Testis (tissue), 5 donors: ENCODE measurements at regions of chr19 and their contacts with region 1.

Region 1: DNA sequence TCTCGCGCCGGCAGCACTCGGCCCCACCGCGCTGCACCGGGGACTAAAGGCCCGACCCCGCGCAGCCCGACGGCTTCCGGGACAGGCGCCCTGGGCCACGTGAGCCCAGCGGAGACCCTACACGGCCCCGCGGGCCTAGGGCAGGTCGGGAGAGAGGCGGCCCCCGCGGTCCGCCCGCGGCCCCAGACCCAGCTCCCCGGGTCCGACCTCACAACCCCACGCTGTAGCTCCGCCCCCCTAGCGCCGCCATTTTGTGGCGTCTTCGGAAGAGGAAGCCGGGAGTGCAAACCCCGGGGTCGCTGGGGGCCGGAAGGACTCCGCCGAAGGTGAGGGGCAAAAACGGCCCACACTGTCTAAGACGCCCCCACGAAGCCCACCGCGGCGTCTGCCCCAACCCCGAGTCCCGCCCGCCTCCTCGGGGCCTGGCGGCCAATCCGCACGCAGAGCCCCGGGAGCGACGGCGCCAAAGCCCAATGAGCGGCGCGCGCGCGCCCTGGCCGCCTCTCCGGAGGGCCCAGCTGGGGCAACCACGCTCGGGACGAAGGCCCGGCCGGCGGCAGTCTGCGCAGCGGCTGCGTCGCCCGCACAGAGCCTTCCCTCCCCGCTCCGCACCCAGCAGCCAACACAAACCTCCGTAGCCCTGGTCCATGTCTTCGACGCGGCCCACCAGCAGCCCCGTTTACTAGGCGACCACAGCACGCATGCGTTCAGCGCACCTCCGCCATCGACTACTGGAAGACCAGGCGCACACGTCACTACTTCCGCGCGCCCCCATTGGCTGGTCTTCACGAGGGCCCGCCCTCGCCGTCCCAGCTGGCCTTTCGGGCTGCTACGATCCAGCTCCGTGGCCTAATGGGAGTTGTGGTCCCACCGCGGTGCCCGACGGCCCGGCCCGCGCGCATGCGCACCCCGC is at the start of gene AKAP8:
- DNase-seq: peak; percentile 99
- H3K4me3 ChIP-seq: peak within 1 kb of the TSS; percentile 76 to 88
- H3K27ac ChIP-seq: peak within 1 kb of the TSS; percentile 88 to 93
- H3K4me1 ChIP-seq: peaks cover 29% of the 10 kb centered on the region
- H3K27me3 ChIP-seq: no peaks in the 10 kb centered on the region
- CTCF ChIP-seq: peak in 1 of 3 experiments; percentile 8
- POLR2A ChIP-seq: no peak
- total RNA-seq, gene AKAP8: 44.0 to 46.3 TPM

Region 2: GRCh38 chr19:15251749-15252397 is 127.5 kb before region 1 on chr19:
- intact Hi-C with region 1: loop called (anchors 10 kb)
- DNase-seq: peak; percentile 83
- H3K4me3 ChIP-seq: no peak overlapping the region
- H3K27ac ChIP-seq: peak overlapping the region; percentile 64 to 82
- H3K4me1 ChIP-seq: peaks cover 76% of the 10 kb centered on the region
- H3K27me3 ChIP-seq: no peaks in the 10 kb centered on the region
- CTCF ChIP-seq: peak; percentile 20 to 76 (median 45)
- POLR2A ChIP-seq: no peak